ENCODE measurements at regions of chr1 and their contacts with region 1.

Region 1: DNA sequence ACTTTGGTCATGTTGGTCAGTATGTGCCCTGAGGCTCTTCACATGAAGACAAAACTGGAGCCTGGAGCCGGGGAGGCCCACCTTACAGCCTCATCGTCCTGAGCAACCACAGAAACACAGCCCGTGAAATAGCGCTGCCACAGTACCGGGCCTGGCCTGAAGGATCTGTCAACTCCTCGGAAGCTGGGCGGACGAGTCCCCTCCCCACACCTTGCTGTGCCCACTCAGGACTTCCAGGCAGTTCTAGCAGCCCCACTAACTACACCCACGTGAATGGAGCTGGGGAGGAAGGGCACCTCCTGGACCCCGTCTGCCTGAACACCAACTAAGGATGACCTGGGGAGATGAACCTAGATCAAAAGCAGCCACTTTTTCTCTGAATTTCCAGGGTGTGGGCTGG is 24.7 kb downstream of the SDE2 start:
- DNase-seq: no peak
- H3K4me3 ChIP-seq: no peak overlapping the region
- H3K27ac ChIP-seq: no peak overlapping the region
- H3K4me1 ChIP-seq: no peaks in the 10 kb centered on the region
- H3K27me3 ChIP-seq: no peaks in the 10 kb centered on the region
- CTCF ChIP-seq: no peak
- POLR2A ChIP-seq: no peak

Region 2: GRCh38 chr1:225946082-225946620 is 28.3 kb before region 1 on chr1:
- intact Hi-C with region 1: loop called (anchors 1 kb)
- DNase-seq: no peak
- H3K4me3 ChIP-seq: no peak overlapping the region
- H3K27ac ChIP-seq: no peak overlapping the region
- H3K4me1 ChIP-seq: peaks cover 5 to 6% of the 10 kb centered on the region in 2 donors
- H3K27me3 ChIP-seq: no peaks in the 10 kb centered on the region
- CTCF ChIP-seq: no peak
- POLR2A ChIP-seq: no peak

Region 3: GRCh38 chr1:226051356-226051755 is 76.9 kb after region 1 on chr1:
- intact Hi-C with region 1: no loop called
- DNase-seq: no peak
- H3K4me3 ChIP-seq: no peak overlapping the region
- H3K27ac ChIP-seq: no peak overlapping the region
- H3K4me1 ChIP-seq: no peaks in the 10 kb centered on the region
- H3K27me3 ChIP-seq: no peaks in the 10 kb centered on the region
- CTCF ChIP-seq: no peak
- POLR2A ChIP-seq: no peak

Measured in breast epithelium (tissue), 4 donors.